ENCODE measurements at regions of chr3 and their contacts with region 1.

Region 1: GRCh38 chr3:67790043-67790442 is 135.6 kb upstream of the SUCLG2 start:
- DNase-seq: peak; percentile 71
- ATAC-seq: peak; percentile 73
- H3K4me3 Mint-ChIP-seq: no peak overlapping the region
- H3K27ac Mint-ChIP-seq: no peak overlapping the region
- H3K4me1 Mint-ChIP-seq: peaks cover 8% of the 10 kb centered on the region
- H3K27me3 Mint-ChIP-seq: no peaks in the 10 kb centered on the region
- CTCF ChIP-seq: peak; percentile 76

Region 2: GRCh38 chr3:67384760-67385397 is 405.2 kb before region 1 on chr3:
- CTCF ChIA-PET with region 1: interaction called, 59 read pairs
- POLR2A ChIA-PET with region 1: no interaction called
- intact Hi-C with region 1: loop called (anchors 2 kb)
- DNase-seq: peak; percentile 36
- ATAC-seq: peak; percentile 55
- H3K4me3 Mint-ChIP-seq: no peak overlapping the region
- H3K27ac Mint-ChIP-seq: no peak overlapping the region
- H3K4me1 Mint-ChIP-seq: peaks cover 27% of the 10 kb centered on the region
- H3K27me3 Mint-ChIP-seq: no peaks in the 10 kb centered on the region
- CTCF ChIP-seq: peak; percentile 37

Region 3: GRCh38 chr3:67593761-67594244 is 196.2 kb before region 1 on chr3:
- CTCF ChIA-PET with region 1: interaction called, 13 read pairs
- POLR2A ChIA-PET with region 1: no interaction called
- intact Hi-C with region 1: no loop called
- DNase-seq: no peak
- ATAC-seq: peak; percentile 53
- H3K4me3 Mint-ChIP-seq: no peak overlapping the region
- H3K27ac Mint-ChIP-seq: no peak overlapping the region
- H3K4me1 Mint-ChIP-seq: peaks cover 59% of the 10 kb centered on the region
- H3K27me3 Mint-ChIP-seq: no peaks in the 10 kb centered on the region
- CTCF ChIP-seq: no peak

Region 4: DNA sequence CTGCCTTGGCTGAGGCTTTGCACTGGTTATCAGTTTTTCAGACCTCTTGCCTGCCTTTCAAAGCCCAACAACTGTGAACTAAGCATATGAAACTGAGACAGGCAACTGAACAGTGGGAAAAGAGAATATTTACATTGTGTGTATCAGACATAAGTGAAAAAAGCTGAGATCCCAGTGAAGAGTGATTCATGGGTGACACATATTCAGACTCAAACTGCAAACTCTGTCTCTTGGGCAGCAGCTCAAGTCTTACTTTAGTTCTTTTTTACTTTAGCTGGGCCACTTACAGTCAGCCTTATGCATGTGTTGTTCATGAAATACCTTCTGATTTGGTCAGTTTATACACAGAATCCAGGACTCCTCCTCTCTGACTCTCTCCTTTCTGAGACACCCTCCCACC is 154.8 kb before region 1 on chr3:
- CTCF ChIA-PET with region 1: no interaction called
- POLR2A ChIA-PET with region 1: no interaction called
- intact Hi-C with region 1: no loop called
- DNase-seq: no peak
- ATAC-seq: peak; percentile 88
- H3K4me3 Mint-ChIP-seq: no peak overlapping the region
- H3K27ac Mint-ChIP-seq: peak overlapping the region; percentile 55
- H3K4me1 Mint-ChIP-seq: peaks cover 61% of the 10 kb centered on the region
- H3K27me3 Mint-ChIP-seq: no peaks in the 10 kb centered on the region
- CTCF ChIP-seq: no peak

Region 5: GRCh38 chr3:67674055-67674454 is 116.0 kb before region 1 on chr3:
- CTCF ChIA-PET with region 1: no interaction called
- POLR2A ChIA-PET with region 1: no interaction called
- intact Hi-C with region 1: no loop called
- DNase-seq: no peak
- ATAC-seq: no peak
- H3K4me3 Mint-ChIP-seq: no peak overlapping the region
- H3K27ac Mint-ChIP-seq: no peak overlapping the region
- H3K4me1 Mint-ChIP-seq: peaks cover 20% of the 10 kb centered on the region
- H3K27me3 Mint-ChIP-seq: no peaks in the 10 kb centered on the region
- CTCF ChIP-seq: no peak

Measured in activated CD8-positive, alpha-beta T cell treated with anti-CD3 and anti-CD28 coated beads for 36 hours (primary cell).